ENCODE measurements at regions of chr16 and their contacts with region 1.

Region 1: GRCh38 chr16:15690296-15690695 is 40.3 kb downstream of the NDE1 start:
- DNase-seq: peak; percentile 61
- ATAC-seq: peak; percentile 82
- H3K4me3 ChIP-seq: no peak overlapping the region
- H3K27ac ChIP-seq: no peak overlapping the region
- H3K4me1 ChIP-seq: no peaks in the 10 kb centered on the region
- H3K27me3 ChIP-seq: no peaks in the 10 kb centered on the region
- CTCF ChIP-seq: no peak
- POLR2A ChIP-seq: no peak
- RAD21 ChIP-seq: no peak

Region 2: DNA sequence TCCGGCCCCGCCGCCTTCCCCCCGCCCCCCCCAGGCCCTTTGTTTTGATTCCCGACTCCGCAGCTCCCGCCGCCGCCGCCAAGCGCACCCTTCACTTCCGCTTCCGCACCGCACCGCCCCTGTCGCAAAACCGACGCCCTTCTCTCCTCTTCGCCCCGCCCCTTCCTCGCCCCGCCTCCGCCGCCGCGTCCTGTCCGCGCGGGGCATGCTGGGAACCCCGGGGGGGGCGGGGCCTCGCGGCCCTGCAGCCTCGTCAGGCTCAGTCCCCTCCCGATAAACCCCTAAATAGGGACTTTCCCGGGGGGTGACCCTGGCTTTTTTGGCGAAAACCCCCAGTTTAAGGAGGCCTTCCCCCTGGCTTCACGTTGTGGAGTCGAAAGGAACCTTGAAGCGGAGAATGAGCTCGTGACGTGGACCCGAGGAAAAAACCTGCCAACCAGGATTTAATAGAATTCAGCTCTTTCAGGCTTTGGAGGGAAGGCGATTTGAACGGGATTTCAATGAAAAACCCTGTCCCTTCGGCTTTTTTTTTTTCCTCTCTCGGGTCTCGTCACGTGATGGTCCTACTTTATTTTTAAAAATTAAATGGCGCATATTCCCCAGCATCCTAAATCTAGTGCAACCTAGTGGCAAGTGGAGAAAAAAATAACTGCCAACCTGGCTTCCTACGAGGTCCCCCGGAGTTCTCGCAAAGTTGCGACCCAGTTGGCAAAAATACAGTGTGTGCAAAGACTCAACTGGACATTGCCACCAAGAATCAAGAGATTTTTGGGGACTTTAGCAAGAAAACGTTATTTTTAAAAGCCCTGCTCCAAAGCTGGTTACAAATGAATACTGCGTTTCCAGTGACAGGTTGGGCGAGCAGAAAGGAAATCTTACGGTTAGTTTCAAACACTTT is 47.0 kb before region 1 on chr16 and contains the start of gene MARF1:
- CTCF ChIA-PET with region 1: interaction called, 3 read pairs
- POLR2A ChIA-PET with region 1: no interaction called
- dilution Hi-C with region 1: no loop called
- in situ Hi-C with region 1: loop called (anchors 5 kb)
- intact Hi-C with region 1: no loop called
- DNase-seq: peak; percentile 90
- ATAC-seq: peak; percentile 98
- H3K4me3 ChIP-seq: peak within 1 kb of the TSS; percentile 99
- H3K27ac ChIP-seq: peak within 1 kb of the TSS; percentile 100
- H3K4me1 ChIP-seq: peaks cover 5% of the 10 kb centered on the region
- H3K27me3 ChIP-seq: no peaks in the 10 kb centered on the region
- CTCF ChIP-seq: peak; percentile 50
- POLR2A ChIP-seq: peak; percentile 92
- RAD21 ChIP-seq: no peak
- total RNA-seq, gene MARF1: 7.8 and 9.0 TPM in 2 replicates